ENCODE measurements at regions of chr6 and their contacts with region 1.

Region 1: DNA sequence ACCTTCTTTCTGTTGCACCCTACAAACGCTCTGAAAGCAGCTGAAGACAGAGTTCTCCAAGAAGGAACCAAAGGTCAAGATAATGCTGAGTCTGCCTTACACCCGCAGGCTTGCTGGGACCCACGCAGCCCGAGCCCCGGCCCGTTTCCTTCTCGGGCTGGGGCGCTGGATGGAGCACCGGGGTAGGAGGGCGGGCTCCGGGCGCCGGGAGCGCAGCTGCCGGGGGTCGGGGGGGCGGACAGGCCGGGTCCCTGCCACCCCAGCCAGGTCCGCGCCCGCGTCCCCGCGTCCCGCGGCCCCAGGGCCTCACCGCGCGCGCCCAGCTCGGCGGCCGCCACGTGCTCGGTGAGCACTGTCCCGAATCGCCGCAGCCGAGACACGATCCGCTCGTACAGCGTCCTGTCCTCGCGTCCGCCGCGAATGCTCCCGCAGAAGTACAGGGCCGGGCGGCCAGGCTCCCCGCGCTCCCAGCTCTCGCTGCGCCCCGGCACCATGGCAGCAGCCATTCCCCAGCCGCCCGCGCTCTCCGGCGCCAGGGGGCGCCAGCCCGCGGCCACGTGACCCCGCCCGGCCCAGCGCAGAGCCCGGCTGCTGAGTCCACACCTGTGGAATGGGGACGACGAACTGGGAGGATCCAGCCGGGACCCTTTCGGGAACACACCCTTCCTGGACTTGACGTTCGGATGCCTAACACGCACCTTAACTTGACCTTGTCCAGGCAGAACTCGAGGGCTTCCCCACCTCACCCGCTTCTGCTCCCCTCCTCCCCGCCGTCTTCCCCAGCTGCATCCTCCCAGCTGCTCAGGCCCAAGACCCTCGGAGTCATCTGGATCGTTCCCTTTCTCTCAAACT is at the start of gene DNPH1:
- DNase-seq: peak; percentile 78
- ATAC-seq: peak; percentile 75
- H3K4me3 Mint-ChIP-seq: peak within 1 kb of the TSS; percentile 95
- H3K27ac Mint-ChIP-seq: peak within 1 kb of the TSS; percentile 90
- H3K4me1 Mint-ChIP-seq: peaks cover 32% of the 10 kb centered on the region
- H3K27me3 Mint-ChIP-seq: no peaks in the 10 kb centered on the region
- CTCF ChIP-seq: peak; percentile 95
- total RNA-seq, gene DNPH1: 86.2 to 86.5 TPM

Region 2: GRCh38 chr6:43174263-43175112 is 54.7 kb before region 1 on chr6:
- CTCF ChIA-PET with region 1: interaction called, 9 read pairs
- POLR2A ChIA-PET with region 1: interaction called, 13 read pairs
- intact Hi-C with region 1: loop called (anchors 5 kb)
- DNase-seq: peak; percentile 98
- ATAC-seq: peak; percentile 78
- H3K4me3 Mint-ChIP-seq: peak overlapping the region; percentile 93
- H3K27ac Mint-ChIP-seq: peak overlapping the region; percentile 83
- H3K4me1 Mint-ChIP-seq: peaks cover 38% of the 10 kb centered on the region
- H3K27me3 Mint-ChIP-seq: no peaks in the 10 kb centered on the region
- CTCF ChIP-seq: no peak

Region 3: GRCh38 chr6:43188431-43188830 is 40.7 kb before region 1 on chr6:
- CTCF ChIA-PET with region 1: interaction called, 16 read pairs
- POLR2A ChIA-PET with region 1: interaction called, 12 read pairs
- intact Hi-C with region 1: no loop called
- DNase-seq: no peak
- ATAC-seq: no peak
- H3K4me3 Mint-ChIP-seq: no peak overlapping the region
- H3K27ac Mint-ChIP-seq: no peak overlapping the region
- H3K4me1 Mint-ChIP-seq: peaks cover 34% of the 10 kb centered on the region
- H3K27me3 Mint-ChIP-seq: no peaks in the 10 kb centered on the region
- CTCF ChIP-seq: no peak

Region 4: GRCh38 chr6:43240950-43241349 is 11.8 kb after region 1 on chr6:
- CTCF ChIA-PET with region 1: interaction called, 30 read pairs
- POLR2A ChIA-PET with region 1: interaction called, 11 read pairs
- intact Hi-C with region 1: no loop called
- DNase-seq: no peak
- ATAC-seq: no peak
- H3K4me3 Mint-ChIP-seq: no peak overlapping the region
- H3K27ac Mint-ChIP-seq: no peak overlapping the region
- H3K4me1 Mint-ChIP-seq: no peaks in the 10 kb centered on the region
- H3K27me3 Mint-ChIP-seq: peaks cover 29% of the 10 kb centered on the region
- CTCF ChIP-seq: no peak

Region 5: GRCh38 chr6:43247113-43247999 is 18.2 kb after region 1 on chr6:
- CTCF ChIA-PET with region 1: interaction called, 14 read pairs
- POLR2A ChIA-PET with region 1: interaction called, 9 read pairs
- intact Hi-C with region 1: no loop called
- DNase-seq: peak; percentile 90
- ATAC-seq: peak; percentile 98
- H3K4me3 Mint-ChIP-seq: peak overlapping the region; percentile 77
- H3K27ac Mint-ChIP-seq: peak overlapping the region; percentile 83
- H3K4me1 Mint-ChIP-seq: peaks cover 24% of the 10 kb centered on the region
- H3K27me3 Mint-ChIP-seq: peaks cover 18% of the 10 kb centered on the region
- CTCF ChIP-seq: no peak

Region 6: GRCh38 chr6:43254138-43254817 is 25.1 kb after region 1 on chr6:
- CTCF ChIA-PET with region 1: interaction called, 14 read pairs
- POLR2A ChIA-PET with region 1: interaction called, 3 read pairs
- intact Hi-C with region 1: no loop called
- DNase-seq: peak; percentile 62
- ATAC-seq: peak; percentile 82
- H3K4me3 Mint-ChIP-seq: no peak overlapping the region
- H3K27ac Mint-ChIP-seq: no peak overlapping the region
- H3K4me1 Mint-ChIP-seq: peaks cover 28% of the 10 kb centered on the region
- H3K27me3 Mint-ChIP-seq: peaks cover 27% of the 10 kb centered on the region
- CTCF ChIP-seq: no peak